Heart right ventricle (tissue), 16 donors: ENCODE measurements at regions of chr1 and their contacts with region 1.

Region 1: GRCh38 chr1:109099938-109100773 is 9.6 kb downstream of the TMEM167B start:
- DNase-seq: peak; percentile 96 to 98
- ATAC-seq: peak; percentile 97 to 99 (median 99)
- H3K4me3 ChIP-seq: peak overlapping the region; percentile 81 to 100 (median 96)
- H3K27ac ChIP-seq: peak overlapping the region; percentile 94 to 100 (median 98)
- H3K4me1 ChIP-seq: peaks cover 0 to 38% (median 22%) of the 10 kb centered on the region in 9 donors
- H3K27me3 ChIP-seq: no peaks in the 10 kb centered on the region
- CTCF ChIP-seq: peak; percentile 76 to 96 (median 90)

Region 2: GRCh38 chr1:108722292-108722691 is 377.9 kb before region 1 on chr1:
- intact Hi-C with region 1: no loop called
- DNase-seq: no peak
- ATAC-seq: no peak
- H3K4me3 ChIP-seq: peak overlapping the region in 1 of 10 donors; percentile 16
- H3K27ac ChIP-seq: peak overlapping the region in 3 of 10 donors; percentile 12 to 28 (median 13)
- H3K4me1 ChIP-seq: peaks cover 0 to 25% (median 8%) of the 10 kb centered on the region in 9 donors
- H3K27me3 ChIP-seq: no peaks in the 10 kb centered on the region
- CTCF ChIP-seq: no peak

Region 3: GRCh38 chr1:108963052-108963686 is 137.0 kb before region 1 on chr1 and contains the start of gene CLCC1:
- intact Hi-C with region 1: loop called in 2 of 10 experiments (anchors 2 to 10 kb)
- DNase-seq: peak; percentile 91 to 95
- ATAC-seq: peak; percentile 97 to 99 (median 98)
- H3K4me3 ChIP-seq: peak within 1 kb of the TSS; percentile 55 to 93 (median 79)
- H3K27ac ChIP-seq: peak within 1 kb of the TSS; percentile 92 to 97 (median 96)
- H3K4me1 ChIP-seq: peaks cover 9 to 29% (median 19%) of the 10 kb centered on the region in 9 donors
- H3K27me3 ChIP-seq: no peaks in the 10 kb centered on the region
- CTCF ChIP-seq: peak in 1 of 9 donors; percentile 6
- total RNA-seq, gene CLCC1: 25.5 to 32.5 (median 28.3) TPM

Region 4: DNA sequence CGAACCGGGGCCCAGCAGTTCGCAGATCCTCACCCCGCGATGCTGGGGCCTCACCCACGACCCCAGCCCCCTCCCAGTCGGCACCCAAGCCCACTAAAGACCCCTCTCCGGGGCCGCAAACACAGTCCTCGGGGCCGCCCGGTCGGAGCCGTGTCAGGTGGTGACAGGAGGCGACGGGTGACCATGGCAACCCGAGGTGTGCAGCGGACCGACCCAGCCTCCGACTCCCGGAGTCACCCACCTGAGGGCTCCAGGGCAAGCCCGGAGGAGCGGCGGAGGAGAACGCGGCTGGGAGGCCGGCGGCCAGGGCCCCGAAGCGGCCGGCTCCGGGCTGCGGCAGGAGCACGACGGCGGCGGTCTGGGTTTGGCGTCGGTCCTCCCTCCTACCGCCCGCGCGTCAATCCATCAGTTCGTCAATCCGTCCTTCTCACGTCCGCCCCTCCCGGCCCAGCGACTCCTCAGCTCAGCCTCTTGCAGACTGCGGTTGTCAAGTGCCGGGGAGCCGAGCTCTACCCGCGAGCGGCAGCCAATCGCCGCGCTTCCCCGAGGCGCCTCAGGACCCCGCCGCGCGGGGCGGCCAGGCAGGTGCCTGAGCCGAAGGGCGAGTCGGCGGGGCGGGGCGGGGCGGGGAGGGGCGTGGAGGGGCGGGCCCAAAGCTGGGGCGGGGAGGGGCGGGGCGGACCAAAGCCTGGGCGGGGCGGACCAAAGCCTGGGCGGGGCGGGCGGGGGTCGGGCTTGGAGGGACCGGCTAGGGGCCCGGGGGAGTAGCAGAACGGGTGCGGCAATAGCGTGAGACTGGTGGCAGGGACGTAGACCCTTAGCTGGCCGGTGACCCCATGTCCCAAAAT is 58.3 kb before region 1 on chr1 and contains the start of gene WDR47:
- intact Hi-C with region 1: loop called in 4 of 10 experiments (anchors 5 to 10 kb)
- DNase-seq: peak; percentile 94 to 95
- ATAC-seq: peak; percentile 97 to 99 (median 98)
- H3K4me3 ChIP-seq: peak within 1 kb of the TSS; percentile 89 to 100 (median 96)
- H3K27ac ChIP-seq: peak within 1 kb of the TSS; percentile 54 to 93 (median 89)
- H3K4me1 ChIP-seq: peaks cover 0 to 20% (median 13%) of the 10 kb centered on the region in 9 donors
- H3K27me3 ChIP-seq: no peaks in the 10 kb centered on the region
- CTCF ChIP-seq: no peak
- total RNA-seq, gene WDR47: 10.7 to 20.6 (median 14.4) TPM

Region 5: DNA sequence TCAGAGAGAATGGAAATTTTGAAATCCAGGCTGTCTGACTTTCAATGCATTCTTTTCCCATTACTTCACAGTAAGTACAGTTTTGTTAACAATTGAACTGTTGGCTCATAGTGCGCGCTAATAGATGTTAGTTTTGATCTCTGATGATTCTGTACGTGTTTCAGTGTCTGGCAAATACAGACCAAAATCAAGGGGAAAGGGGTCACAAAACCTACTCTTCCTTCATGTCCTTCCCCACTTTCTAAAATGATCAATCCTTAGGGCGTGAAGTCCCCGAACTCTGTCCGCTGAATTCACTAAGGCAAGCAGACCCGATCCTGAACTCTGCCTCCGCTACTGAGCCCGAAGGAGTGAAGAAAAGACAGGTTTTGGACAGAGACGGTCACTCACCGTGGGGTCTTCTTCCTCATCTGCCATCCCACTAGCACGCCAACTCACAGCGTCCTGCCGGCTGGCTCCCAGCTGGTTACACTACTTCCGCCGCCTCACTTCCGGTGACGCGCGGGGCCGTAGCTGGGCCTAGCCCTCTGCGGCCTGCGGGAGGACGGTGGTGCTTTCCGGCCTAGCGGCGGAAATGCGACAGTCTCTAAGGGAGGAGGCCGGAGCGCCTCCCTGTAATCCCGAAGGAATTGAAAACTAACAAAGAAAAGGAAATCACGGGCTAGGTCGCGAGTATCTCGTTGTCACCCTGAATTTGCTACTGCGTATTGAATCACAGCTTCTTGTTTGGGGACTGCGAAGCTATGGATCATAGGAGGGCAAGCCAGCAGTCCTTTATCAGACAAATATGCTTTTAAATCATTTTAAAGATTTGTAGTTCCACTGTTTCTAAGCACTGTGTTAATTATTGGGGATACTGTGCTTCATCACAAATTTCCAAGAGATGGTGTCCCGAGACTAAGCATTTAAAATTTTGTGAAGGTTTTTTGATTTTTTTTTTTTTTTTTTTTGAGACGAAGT is 24.3 kb before region 1 on chr1 and contains the start of gene TAF13:
- intact Hi-C with region 1: loop called in 1 of 10 experiments (anchors 1 kb)
- DNase-seq: peak; percentile 95
- ATAC-seq: peak; percentile 97 to 100 (median 99)
- H3K4me3 ChIP-seq: peak within 1 kb of the TSS; percentile 55 to 90 (median 76)
- H3K27ac ChIP-seq: peak within 1 kb of the TSS; percentile 58 to 98 (median 94)
- H3K4me1 ChIP-seq: peaks cover 7 to 31% (median 24%) of the 10 kb centered on the region in 9 donors
- H3K27me3 ChIP-seq: no peaks in the 10 kb centered on the region
- CTCF ChIP-seq: peak in 6 of 9 donors; percentile 12 to 46 (median 32)
- total RNA-seq, gene TAF13: 45.8 to 69.9 (median 59.0) TPM

Region 6: GRCh38 chr1:109193653-109194590 is 93.8 kb after region 1 on chr1:
- intact Hi-C with region 1: loop called in 1 of 10 experiments (anchors 10 kb)
- DNase-seq: peak in 1 of 2 donors; percentile 16
- ATAC-seq: no peak
- H3K4me3 ChIP-seq: no peak overlapping the region
- H3K27ac ChIP-seq: no peak overlapping the region
- H3K4me1 ChIP-seq: peaks cover 0 to 18% (median 8%) of the 10 kb centered on the region in 9 donors
- H3K27me3 ChIP-seq: no peaks in the 10 kb centered on the region
- CTCF ChIP-seq: peak in 7 of 9 donors; percentile 33 to 67 (median 38)

Region 7: DNA sequence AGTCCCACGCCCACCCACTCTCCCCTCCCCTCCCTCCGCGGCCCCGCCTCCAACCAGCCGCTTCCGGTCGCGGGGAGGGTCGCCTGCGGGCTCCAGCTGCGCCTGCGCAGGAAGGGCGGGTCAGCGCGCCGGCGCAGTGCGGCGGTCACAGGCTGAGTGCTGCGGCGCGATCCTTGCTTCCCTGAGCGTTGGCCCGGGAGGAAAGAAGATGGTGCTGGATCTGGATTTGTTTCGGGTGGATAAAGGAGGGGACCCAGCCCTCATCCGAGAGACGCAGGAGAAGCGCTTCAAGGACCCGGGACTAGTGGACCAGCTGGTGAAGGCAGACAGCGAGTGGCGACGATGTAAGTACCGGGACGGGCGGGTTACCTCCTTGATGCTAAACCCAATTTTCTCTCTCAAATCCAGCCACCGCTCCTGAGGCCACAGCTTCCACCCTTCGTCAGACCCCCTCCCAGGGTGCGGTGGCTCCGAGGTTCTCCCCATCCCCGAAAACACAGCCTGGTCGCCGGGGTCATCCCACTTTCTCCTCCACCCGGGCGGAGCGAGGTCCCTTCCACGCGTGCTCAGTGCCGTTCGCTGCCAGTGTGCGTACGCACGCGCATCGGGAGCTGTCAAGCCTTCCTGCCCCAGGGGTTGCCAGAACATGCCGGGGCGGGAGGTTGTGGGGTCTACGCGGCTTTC is 113.8 kb after region 1 on chr1 and contains the start of gene SARS1:
- intact Hi-C with region 1: loop called in 1 of 10 experiments (anchors 5 kb)
- DNase-seq: peak; percentile 85 to 91
- ATAC-seq: peak; percentile 95 to 98 (median 96)
- H3K4me3 ChIP-seq: peak within 1 kb of the TSS; percentile 62 to 90 (median 85)
- H3K27ac ChIP-seq: peak within 1 kb of the TSS; percentile 24 to 92 (median 86)
- H3K4me1 ChIP-seq: peaks cover 8 to 43% (median 31%) of the 10 kb centered on the region in 9 donors
- H3K27me3 ChIP-seq: no peaks in the 10 kb centered on the region
- CTCF ChIP-seq: no peak
- total RNA-seq, gene SARS1: 86.3 to 123 (median 99.2) TPM

Region 8: GRCh38 chr1:109282952-109283747 is 183.0 kb after region 1 on chr1 and contains the start of gene PSRC1:
- intact Hi-C with region 1: no loop called
- DNase-seq: peak; percentile 95 to 96
- ATAC-seq: peak; percentile 99 to 100 (median 99)
- H3K4me3 ChIP-seq: peak within 1 kb of the TSS; percentile 46 to 83 (median 72)
- H3K27ac ChIP-seq: peak within 1 kb of the TSS; percentile 68 to 92 (median 84)
- H3K4me1 ChIP-seq: peaks cover 4 to 31% (median 10%) of the 10 kb centered on the region in 9 donors
- H3K27me3 ChIP-seq: peaks cover 0 to 2% (median 0%) of the 10 kb centered on the region in 7 donors
- CTCF ChIP-seq: peak in 7 of 9 donors; percentile 34 to 76 (median 51)
- total RNA-seq, gene PSRC1: 0.34 to 2.4 (median 0.59) TPM